Dendritic cell treated with granulocyte-macrophage colony-stimulating factor and Interleukin-4, amounts not matched to agents 40 ng/mL and 50 ng/mL, for 4 days (primary cell): ENCODE measurements at regions of chr6 and their contacts with region 1.

Region 1: DNA sequence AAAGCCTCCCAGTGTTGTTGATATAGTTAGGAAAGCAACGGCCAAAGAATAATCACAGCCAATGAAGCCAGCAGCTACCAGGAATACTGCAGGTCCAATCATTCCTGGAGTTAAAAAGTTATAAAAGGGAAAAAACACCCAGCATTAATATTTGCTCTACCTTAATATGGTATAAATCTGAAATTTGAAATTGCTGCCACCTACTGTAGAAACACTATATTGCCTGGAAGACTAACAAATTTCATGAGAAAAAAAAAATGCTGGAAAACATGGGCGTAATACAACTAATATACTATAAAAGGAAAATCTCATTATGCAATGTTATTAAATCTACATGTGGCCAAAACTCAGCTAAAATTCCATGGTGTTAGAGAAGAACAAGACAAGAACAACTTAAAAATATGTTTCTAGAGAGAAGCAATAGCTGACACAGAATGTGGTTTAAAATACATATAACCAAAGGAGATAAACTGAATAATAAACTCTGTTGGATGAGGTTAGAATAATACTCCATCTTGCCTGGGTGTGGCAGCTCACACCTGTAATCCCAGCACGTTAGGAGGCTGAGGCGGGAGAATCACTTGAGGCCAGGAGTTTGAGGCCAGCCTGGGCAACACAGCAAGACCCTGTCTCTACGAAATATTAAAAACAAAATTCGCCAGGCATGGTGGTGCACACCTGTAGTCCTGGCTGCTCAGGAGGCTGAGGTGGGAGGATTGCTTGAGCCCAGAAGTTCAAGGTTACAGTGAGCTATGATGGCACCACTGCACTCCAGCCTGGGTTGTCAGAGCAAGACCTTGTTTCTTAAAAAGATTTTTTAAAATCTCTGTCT is 43.1 kb downstream of the SLC17A5 start:
- H3K4me3 Mint-ChIP-seq: no peak overlapping the region
- H3K27ac Mint-ChIP-seq: no peak overlapping the region
- H3K4me1 Mint-ChIP-seq: no peaks in the 10 kb centered on the region
- H3K27me3 Mint-ChIP-seq: no peaks in the 10 kb centered on the region

Region 2: GRCh38 chr6:73515204-73515655 is 95.4 kb before region 1 on chr6:
- intact Hi-C with region 1: loop called (anchors 2 kb)
- H3K4me3 Mint-ChIP-seq: no peak overlapping the region
- H3K27ac Mint-ChIP-seq: peak overlapping the region; percentile 67
- H3K4me1 Mint-ChIP-seq: peaks cover 60% of the 10 kb centered on the region
- H3K27me3 Mint-ChIP-seq: no peaks in the 10 kb centered on the region